ENCODE measurements at regions of chr1 and their contacts with region 1.

Region 1: DNA sequence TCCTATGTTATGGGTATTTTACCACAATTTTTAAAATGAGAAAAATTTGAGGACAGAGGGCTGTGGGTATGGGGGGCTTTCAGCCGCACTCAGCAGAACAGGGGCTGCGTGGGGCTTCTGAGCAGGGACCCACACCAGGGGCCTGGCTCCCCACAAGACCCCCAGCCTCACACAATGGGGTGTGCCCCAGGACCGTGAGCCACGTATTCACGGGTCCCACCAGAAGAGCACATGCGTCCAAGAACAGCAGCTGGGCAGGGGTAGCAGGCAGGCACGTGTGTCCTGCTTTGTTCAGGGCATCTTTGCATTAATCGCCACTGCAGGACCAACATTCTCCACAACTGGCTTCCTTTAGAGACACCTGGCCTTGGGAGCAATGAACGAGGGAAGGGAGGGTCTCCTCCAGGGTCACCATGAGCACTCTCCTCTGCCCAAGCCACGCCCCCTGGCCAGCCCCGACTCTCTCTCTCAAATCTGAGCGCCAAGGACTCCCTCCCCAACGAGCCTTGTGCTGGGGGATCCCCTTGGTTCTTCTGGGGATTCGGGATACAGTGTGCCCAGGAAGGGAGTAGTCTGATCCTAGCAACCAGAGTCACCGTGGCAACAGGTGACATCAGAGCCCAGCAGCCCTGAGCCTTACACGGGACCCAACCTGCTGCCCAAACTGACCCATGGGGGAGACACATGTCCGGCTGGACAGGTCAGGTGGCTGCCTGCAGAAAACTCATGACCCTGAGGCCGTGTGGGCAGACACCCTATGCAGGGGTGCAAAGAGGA is 7.4 kb upstream of the ARF1 start:
- DNase-seq: no peak
- H3K4me3 ChIP-seq: no peak overlapping the region
- H3K4me3 Mint-ChIP-seq: no peak overlapping the region
- H3K27ac ChIP-seq: no peak overlapping the region
- H3K27ac Mint-ChIP-seq: no peak overlapping the region
- H3K4me1 ChIP-seq: no peaks in the 10 kb centered on the region
- H3K4me1 Mint-ChIP-seq: peaks cover 8% of the 10 kb centered on the region
- H3K27me3 ChIP-seq: peaks cover 2 to 4% of the 10 kb centered on the region in 2 donors
- H3K27me3 Mint-ChIP-seq: peaks cover 10 to 28% (median 14%) of the 10 kb centered on the region in 3 donors
- CTCF ChIP-seq: no peak

Region 2: DNA sequence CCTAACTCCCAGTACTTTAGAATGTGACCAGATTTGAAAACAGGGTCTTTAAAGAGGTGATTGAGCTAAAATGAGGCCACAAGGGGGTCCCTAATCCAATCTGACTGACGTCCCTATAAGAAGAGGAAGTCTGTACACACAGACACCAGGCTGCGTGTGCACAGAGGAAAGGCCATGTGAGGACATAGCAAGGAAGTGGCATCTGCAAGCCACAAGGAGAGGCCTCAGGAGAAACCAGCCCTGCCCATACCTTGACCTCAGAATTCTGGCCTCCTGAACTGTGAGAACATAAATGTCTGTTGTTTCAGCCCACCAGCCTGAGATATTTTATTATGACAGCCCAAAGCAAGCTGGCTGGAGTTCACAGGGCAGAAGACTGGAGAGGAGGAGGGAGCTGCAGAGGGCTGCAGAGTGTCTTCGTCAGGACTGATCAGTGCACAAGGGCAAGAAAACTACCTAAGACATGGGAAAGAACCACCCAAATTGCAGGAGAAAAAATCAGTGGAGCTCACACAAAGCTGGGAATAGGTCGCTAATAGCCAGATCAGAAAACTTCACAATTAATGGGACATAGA is 113.4 kb before region 1 on chr1:
- intact Hi-C with region 1: no loop called
- DNase-seq: no peak
- H3K4me3 ChIP-seq: no peak overlapping the region
- H3K4me3 Mint-ChIP-seq: no peak overlapping the region
- H3K27ac ChIP-seq: no peak overlapping the region
- H3K27ac Mint-ChIP-seq: no peak overlapping the region
- H3K4me1 ChIP-seq: peaks cover 0 to 5% of the 10 kb centered on the region in 2 donors
- H3K4me1 Mint-ChIP-seq: peaks cover 6% of the 10 kb centered on the region
- H3K27me3 ChIP-seq: no peaks in the 10 kb centered on the region
- H3K27me3 Mint-ChIP-seq: peaks cover 0 to 4% (median 2%) of the 10 kb centered on the region in 3 donors
- CTCF ChIP-seq: no peak

Region 3: GRCh38 chr1:228013935-228014930 is 60.9 kb before region 1 on chr1:
- intact Hi-C with region 1: no loop called
- DNase-seq: no peak
- H3K4me3 ChIP-seq: no peak overlapping the region
- H3K4me3 Mint-ChIP-seq: no peak overlapping the region
- H3K27ac ChIP-seq: no peak overlapping the region
- H3K27ac Mint-ChIP-seq: no peak overlapping the region
- H3K4me1 ChIP-seq: no peaks in the 10 kb centered on the region
- H3K4me1 Mint-ChIP-seq: no peaks in the 10 kb centered on the region
- H3K27me3 ChIP-seq: peaks cover 0 to 8% of the 10 kb centered on the region in 2 donors
- H3K27me3 Mint-ChIP-seq: peaks cover 7 to 20% (median 11%) of the 10 kb centered on the region in 3 donors
- CTCF ChIP-seq: no peak

Region 4: DNA sequence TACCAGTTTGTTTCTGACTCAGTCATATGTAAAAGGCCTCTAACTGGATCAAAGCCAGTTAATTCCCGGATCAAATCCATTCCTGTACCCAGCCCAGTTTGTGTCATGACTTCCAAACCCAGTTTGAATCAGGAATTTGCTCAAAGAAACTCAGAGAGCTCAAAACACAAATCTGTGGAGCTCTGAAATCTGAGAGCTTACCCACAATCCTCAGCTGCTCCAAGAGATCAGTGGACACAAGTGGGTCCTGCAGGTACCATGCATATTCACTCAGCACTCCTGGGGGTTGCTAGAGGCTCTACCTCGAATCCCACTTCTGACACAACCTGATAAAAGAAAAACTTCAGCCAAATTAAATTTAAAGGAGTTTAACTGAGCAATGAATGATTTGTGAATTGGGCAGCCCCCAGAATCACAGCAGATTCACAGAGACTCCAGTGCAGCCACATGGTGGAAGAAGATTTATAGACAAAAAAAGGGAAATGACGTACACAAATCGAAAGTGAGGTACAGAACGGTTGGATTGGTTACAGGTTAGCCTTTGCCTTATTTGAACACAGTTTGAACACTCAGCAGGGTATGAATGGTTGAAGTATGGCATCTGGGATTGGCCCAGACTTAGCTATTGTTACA is 45.8 kb after region 1 on chr1:
- intact Hi-C with region 1: loop called in 1 of 2 experiments (anchors 5 kb)
- DNase-seq: peak in 2 of 3 donors; percentile 49 to 58
- H3K4me3 ChIP-seq: peak overlapping the region in 1 of 3 experiments; percentile 46
- H3K4me3 Mint-ChIP-seq: peak overlapping the region; percentile 8 to 64
- H3K27ac ChIP-seq: no peak overlapping the region
- H3K27ac Mint-ChIP-seq: peak overlapping the region in 3 of 7 donors; percentile 8 to 40 (median 22)
- H3K4me1 ChIP-seq: peaks cover 4 to 8% of the 10 kb centered on the region in 2 donors
- H3K4me1 Mint-ChIP-seq: peaks cover 8% of the 10 kb centered on the region
- H3K27me3 ChIP-seq: no peaks in the 10 kb centered on the region
- H3K27me3 Mint-ChIP-seq: peaks cover 9 to 13% (median 9%) of the 10 kb centered on the region in 3 donors
- CTCF ChIP-seq: no peak

Region 5: DNA sequence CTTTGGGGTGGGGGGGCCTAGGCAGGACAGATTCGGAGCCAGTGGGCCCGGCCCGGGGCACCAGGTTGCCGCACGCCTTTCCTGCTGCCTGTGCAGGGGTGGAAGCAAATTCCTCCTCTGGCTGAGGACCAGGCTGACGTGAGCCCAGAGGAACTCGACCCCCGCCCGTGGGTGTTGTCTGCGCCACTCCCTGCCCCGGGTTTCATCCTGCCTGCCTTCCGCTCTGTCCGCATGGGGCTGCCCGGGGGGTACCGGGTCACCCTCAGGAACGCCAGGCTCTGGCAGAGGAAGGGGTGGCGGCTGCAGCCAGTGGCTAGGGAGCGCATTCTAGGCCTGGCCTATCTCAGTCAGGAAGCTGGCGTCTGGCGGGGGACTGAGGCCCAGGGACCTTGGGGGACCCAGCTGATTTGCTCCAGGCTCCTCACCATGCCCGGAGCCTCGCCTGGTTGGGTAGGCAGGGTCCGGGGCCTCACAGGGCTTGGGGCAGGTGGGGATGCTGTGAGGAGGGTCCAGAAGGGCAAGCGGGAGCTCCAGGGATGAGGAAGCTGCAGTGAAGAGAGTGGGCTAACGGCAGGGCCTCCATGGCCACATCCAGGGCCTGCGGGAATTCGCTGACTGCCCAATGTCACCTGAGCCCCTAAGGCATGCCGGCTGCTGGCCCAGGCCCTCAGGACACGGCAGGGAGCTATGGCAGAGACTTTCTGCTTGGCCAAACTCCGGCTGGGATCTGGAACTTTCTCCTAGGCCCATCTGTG is 88.0 kb after region 1 on chr1:
- intact Hi-C with region 1: no loop called
- DNase-seq: no peak
- H3K4me3 ChIP-seq: no peak overlapping the region
- H3K4me3 Mint-ChIP-seq: peak overlapping the region in 1 of 2 donors; percentile 42
- H3K27ac ChIP-seq: no peak overlapping the region
- H3K27ac Mint-ChIP-seq: peak overlapping the region in 1 of 7 donors; percentile 4
- H3K4me1 ChIP-seq: peaks cover 30 to 35% of the 10 kb centered on the region in 2 donors
- H3K4me1 Mint-ChIP-seq: peaks cover 31% of the 10 kb centered on the region
- H3K27me3 ChIP-seq: peaks cover 0 to 16% of the 10 kb centered on the region in 2 donors
- H3K27me3 Mint-ChIP-seq: peaks cover 2 to 28% (median 14%) of the 10 kb centered on the region in 3 donors
- CTCF ChIP-seq: no peak